ENCODE measurements at regions of chr5 and their contacts with region 1.

Region 1: DNA sequence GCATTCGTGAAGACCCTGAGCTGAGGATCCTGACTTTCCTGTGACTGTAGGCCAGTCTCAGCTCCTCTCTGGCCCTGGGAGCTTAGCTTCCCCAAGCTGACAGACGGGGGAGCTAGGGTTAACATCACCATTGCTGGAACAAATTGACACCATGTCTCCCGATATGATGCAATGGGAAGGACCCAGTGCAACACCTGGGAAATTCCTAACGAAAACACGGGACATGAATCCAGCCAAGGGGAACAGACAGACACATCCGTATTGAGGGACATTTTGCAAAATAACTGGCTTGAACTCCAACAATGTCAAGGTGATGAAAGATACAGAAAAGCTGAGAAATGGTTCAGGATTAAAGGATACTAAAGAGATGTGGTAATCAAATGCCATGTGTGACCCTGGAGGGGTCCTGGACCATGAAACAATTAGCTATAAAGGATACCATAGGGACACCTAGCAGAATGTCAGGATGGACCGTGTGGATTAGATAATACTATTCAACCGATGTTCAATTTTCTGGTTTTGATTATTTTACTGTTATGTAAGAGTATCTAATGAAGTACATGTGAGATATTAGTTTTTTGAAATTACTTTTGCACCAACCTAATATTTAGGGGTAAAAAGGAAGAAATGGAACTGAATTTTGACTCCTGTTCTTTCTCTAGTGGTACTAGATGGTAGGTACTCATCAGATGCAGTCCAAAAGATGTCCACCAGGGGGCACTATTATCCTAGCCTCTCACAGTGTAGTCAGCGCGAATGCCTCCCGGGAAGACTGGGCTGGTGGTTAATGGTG is 52.7 kb downstream of the NDST1 start:
- DNase-seq: peak; percentile 88 to 92
- H3K4me3 ChIP-seq: no peak overlapping the region
- H3K4me3 Mint-ChIP-seq: peak overlapping the region; percentile 53
- H3K27ac Mint-ChIP-seq: peak overlapping the region; percentile 78
- H3K4me1 ChIP-seq: peaks cover 21% of the 10 kb centered on the region
- H3K4me1 Mint-ChIP-seq: peaks cover 25% of the 10 kb centered on the region
- H3K27me3 ChIP-seq: no peaks in the 10 kb centered on the region
- H3K27me3 Mint-ChIP-seq: no peaks in the 10 kb centered on the region
- CTCF ChIP-seq: peak; percentile 83 to 93

Region 2: DNA sequence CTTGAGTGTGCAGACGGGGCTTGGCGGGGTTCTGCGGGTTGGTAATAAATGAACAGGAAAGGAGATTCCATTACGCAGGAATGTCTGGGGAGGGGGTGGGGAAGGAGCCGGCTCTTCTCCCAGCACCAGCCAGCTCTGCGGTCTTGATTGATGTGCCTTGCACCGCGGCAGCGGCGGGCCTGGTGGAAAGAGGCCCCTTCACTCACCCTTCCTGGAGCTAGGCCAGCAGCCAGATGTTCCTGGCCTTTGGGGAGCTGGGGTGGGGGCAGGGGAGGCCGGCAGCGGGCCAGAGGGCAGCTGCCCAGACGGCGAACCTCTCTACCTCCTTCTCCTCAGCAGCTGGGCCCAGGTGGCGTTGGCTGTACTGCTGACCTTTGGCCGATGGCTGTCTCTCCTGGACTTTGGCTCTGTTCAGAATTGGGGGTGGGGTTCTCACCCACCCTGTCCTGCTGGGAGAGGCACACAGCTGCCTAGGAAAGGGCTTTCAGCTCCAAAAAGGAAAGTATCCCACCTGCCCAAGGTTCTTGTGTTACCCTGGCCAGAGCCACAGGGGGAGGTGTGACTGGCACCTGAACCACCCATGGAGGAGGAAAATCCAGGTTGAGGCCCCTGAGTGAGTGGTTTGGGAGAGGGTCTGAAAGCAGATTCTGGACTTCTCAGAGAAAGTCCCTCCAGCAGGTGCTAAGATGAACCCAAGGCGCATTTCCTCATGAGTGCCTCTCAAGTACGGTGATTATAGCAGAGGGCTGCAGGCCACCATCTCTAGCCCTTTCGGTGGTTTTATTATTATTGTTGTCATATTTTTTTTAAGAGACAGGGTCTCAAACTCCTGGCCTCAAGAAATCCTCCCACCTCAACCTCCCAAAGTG is 21.9 kb after region 1 on chr5:
- CTCF ChIA-PET with region 1: interaction called, 15 read pairs
- POLR2A ChIA-PET with region 1: no interaction called
- intact Hi-C with region 1: loop called (anchors 1 kb)
- DNase-seq: peak; percentile 88 to 94
- H3K4me3 ChIP-seq: peak overlapping the region; percentile 32
- H3K4me3 Mint-ChIP-seq: peak overlapping the region; percentile 75
- H3K27ac Mint-ChIP-seq: peak overlapping the region; percentile 91
- H3K4me1 ChIP-seq: peaks cover 57% of the 10 kb centered on the region
- H3K4me1 Mint-ChIP-seq: peaks cover 17% of the 10 kb centered on the region
- H3K27me3 ChIP-seq: no peaks in the 10 kb centered on the region
- H3K27me3 Mint-ChIP-seq: no peaks in the 10 kb centered on the region
- CTCF ChIP-seq: no peak

Region 3: DNA sequence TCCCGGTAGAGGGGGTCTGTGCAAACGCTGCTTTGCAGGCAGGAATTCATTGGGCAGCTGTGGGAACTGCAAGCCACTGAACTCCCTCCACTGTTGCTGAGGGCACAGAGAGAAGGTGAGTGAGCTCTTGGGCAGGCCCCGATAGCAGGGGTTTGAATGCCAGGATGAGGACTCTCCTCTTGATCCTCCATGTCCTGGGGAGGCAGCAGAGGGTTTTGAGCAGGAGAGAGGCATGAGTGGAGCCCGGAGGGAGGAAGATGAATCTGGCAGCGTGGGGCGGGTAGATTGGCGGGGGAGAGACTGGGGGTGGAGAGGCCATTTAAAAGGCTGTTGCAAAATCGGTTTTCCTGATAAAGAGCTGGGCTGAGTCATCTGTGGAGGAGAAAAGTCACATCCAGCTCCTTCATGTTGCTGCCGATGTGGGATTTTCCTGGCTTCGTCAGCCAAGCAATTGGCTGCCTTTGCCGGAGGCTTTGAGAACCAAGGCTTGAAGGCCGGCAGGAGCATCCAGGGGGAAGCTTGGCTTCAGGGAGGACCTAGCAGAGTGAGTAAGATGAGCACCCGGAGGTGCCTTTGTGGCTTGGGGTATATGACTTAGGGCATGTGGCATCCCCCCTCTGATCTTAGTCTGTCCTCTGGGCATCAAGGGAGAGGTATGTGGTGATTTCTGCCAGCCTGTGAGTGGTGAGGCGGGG is 79.9 kb after region 1 on chr5 and contains the start of gene SYNPO:
- CTCF ChIA-PET with region 1: interaction called, 6 read pairs
- POLR2A ChIA-PET with region 1: no interaction called
- intact Hi-C with region 1: loop called (anchors 1 kb)
- DNase-seq: peak; percentile 56 to 60
- H3K4me3 ChIP-seq: peak within 1 kb of the TSS; percentile 33
- H3K4me3 Mint-ChIP-seq: peak within 1 kb of the TSS; percentile 61
- H3K27ac Mint-ChIP-seq: peak within 1 kb of the TSS; percentile 79
- H3K4me1 ChIP-seq: peaks cover 80% of the 10 kb centered on the region
- H3K4me1 Mint-ChIP-seq: peaks cover 52% of the 10 kb centered on the region
- H3K27me3 ChIP-seq: no peaks in the 10 kb centered on the region
- H3K27me3 Mint-ChIP-seq: no peaks in the 10 kb centered on the region
- CTCF ChIP-seq: no peak
- total RNA-seq, gene SYNPO: 22.4 and 25.1 TPM in 2 replicates

Region 4: GRCh38 chr5:150700594-150701293 is 140.1 kb after region 1 on chr5 and contains the start of gene RBM22:
- CTCF ChIA-PET with region 1: interaction called, 12 read pairs
- POLR2A ChIA-PET with region 1: interaction called, 7 read pairs
- intact Hi-C with region 1: loop called (anchors 1 kb)
- DNase-seq: peak; percentile 91 to 93
- H3K4me3 ChIP-seq: peak within 1 kb of the TSS; percentile 98
- H3K4me3 Mint-ChIP-seq: no peak within 1 kb of the TSS
- H3K27ac Mint-ChIP-seq: no peak within 1 kb of the TSS
- H3K4me1 ChIP-seq: no peaks in the 10 kb centered on the region
- H3K4me1 Mint-ChIP-seq: no peaks in the 10 kb centered on the region
- H3K27me3 ChIP-seq: no peaks in the 10 kb centered on the region
- H3K27me3 Mint-ChIP-seq: no peaks in the 10 kb centered on the region
- CTCF ChIP-seq: peak; percentile 57 to 72
- total RNA-seq, gene RBM22: 55.3 TPM in 2 replicates

Region 5: GRCh38 chr5:150778517-150779396 is 218.2 kb after region 1 on chr5 and contains the start of gene SMIM3:
- CTCF ChIA-PET with region 1: interaction called, 7 read pairs
- POLR2A ChIA-PET with region 1: no interaction called
- intact Hi-C with region 1: loop called (anchors 1 kb)
- DNase-seq: peak; percentile 86 to 89
- H3K4me3 ChIP-seq: peak within 1 kb of the TSS; percentile 75
- H3K4me3 Mint-ChIP-seq: peak within 1 kb of the TSS; percentile 91
- H3K27ac Mint-ChIP-seq: peak within 1 kb of the TSS; percentile 80
- H3K4me1 ChIP-seq: peaks cover 34% of the 10 kb centered on the region
- H3K4me1 Mint-ChIP-seq: peaks cover 32% of the 10 kb centered on the region
- H3K27me3 ChIP-seq: no peaks in the 10 kb centered on the region
- H3K27me3 Mint-ChIP-seq: no peaks in the 10 kb centered on the region
- CTCF ChIP-seq: peak; percentile 35 to 83
- total RNA-seq, gene SMIM3: 19.2 and 19.4 TPM in 2 replicates

Region 6: GRCh38 chr5:150846654-150847333 is 286.2 kb after region 1 on chr5:
- CTCF ChIA-PET with region 1: interaction called, 15 read pairs
- POLR2A ChIA-PET with region 1: no interaction called
- intact Hi-C with region 1: loop called (anchors 1 kb)
- DNase-seq: peak; percentile 78 to 79
- H3K4me3 ChIP-seq: no peak overlapping the region
- H3K4me3 Mint-ChIP-seq: no peak overlapping the region
- H3K27ac Mint-ChIP-seq: no peak overlapping the region
- H3K4me1 ChIP-seq: peaks cover 5% of the 10 kb centered on the region; the same call in 1 of the 2 replicates
- H3K4me1 Mint-ChIP-seq: no peaks in the 10 kb centered on the region
- H3K27me3 ChIP-seq: no peaks in the 10 kb centered on the region
- H3K27me3 Mint-ChIP-seq: no peaks in the 10 kb centered on the region
- CTCF ChIP-seq: peak; percentile 65 to 74